Activated CD4-positive, alpha-beta memory T cell treated with anti-CD3 and anti-CD28 coated beads for 36 hours (primary cell): ENCODE measurements at regions of chr15 and their contacts with region 1.

Region 1: DNA sequence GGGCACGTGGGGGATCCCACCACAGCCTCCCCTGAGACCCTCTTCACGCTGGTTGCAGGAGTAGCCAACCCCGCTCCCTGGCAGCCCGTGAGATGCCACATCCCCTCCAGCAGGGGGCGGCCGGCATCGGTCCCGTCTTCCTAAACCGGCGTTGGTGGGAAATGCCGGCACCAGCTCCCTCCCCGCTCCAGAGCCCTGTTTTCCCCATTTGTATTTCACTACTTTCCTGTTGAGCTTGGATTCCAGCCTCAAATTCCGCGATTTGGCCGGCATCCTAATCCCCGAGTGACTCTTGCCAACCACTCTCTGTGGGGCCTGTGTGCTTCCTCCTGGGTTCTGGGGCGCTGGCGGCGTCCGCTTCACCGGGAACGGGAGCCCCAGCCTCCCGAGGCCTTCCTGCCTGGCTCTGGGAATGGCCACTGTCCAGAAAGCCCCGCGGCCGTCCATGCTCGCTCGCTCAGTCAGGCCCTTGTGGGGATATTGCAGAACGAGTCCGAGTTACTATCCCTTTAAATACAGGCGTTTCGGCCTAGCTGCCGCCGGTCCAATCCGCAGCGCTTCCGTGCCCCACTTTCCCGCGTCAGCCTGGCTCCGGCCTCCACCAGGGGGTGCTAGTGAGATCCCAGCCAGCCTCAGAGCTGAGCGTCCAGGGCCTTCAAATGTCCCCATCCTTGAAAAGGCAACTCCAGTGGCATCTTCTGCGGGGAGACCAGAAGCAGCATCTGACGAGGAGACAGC is 8.1 kb upstream of the ADAMTS17 start:
- DNase-seq: peak; percentile 94
- H3K4me3 Mint-ChIP-seq: peak overlapping the region; percentile 80
- H3K27ac Mint-ChIP-seq: peak overlapping the region; percentile 69
- H3K4me1 Mint-ChIP-seq: peaks cover 6% of the 10 kb centered on the region
- H3K27me3 Mint-ChIP-seq: peaks cover 7% of the 10 kb centered on the region

Region 2: DNA sequence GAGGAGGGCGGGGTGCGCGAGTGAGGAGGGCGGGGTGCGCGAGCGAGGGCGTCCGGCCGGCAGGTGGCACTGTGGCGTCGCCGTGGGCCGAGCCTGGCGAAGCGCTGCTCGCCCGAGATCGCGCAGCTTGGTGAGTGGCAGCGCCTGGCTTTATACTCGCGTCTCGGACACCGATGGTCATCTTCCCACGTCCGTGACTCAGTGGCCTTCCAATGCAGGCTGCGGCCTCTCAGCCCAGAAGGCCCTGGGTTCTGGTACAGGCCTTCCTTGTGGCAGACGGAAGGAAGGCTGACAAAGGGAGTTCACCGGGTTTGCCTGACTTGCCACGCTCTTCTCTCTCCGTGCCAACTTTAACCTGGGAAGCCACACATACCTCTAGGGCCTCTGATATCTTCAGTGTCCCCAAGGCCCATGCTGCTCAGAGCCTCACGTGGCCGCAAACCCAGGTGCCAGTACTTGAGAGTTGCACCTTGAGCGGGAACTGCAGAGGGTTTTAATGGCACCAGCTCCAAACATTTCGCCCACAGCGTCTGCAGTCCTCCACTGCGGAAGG is 421.4 kb before region 1 on chr15:
- CTCF ChIA-PET with region 1: interaction called, 14 read pairs
- POLR2A ChIA-PET with region 1: no interaction called
- intact Hi-C with region 1: no loop called
- DNase-seq: peak; percentile 87
- H3K4me3 Mint-ChIP-seq: peak overlapping the region; percentile 77
- H3K27ac Mint-ChIP-seq: peak overlapping the region; percentile 42
- H3K4me1 Mint-ChIP-seq: peaks cover 8% of the 10 kb centered on the region
- H3K27me3 Mint-ChIP-seq: no peaks in the 10 kb centered on the region

Region 3: DNA sequence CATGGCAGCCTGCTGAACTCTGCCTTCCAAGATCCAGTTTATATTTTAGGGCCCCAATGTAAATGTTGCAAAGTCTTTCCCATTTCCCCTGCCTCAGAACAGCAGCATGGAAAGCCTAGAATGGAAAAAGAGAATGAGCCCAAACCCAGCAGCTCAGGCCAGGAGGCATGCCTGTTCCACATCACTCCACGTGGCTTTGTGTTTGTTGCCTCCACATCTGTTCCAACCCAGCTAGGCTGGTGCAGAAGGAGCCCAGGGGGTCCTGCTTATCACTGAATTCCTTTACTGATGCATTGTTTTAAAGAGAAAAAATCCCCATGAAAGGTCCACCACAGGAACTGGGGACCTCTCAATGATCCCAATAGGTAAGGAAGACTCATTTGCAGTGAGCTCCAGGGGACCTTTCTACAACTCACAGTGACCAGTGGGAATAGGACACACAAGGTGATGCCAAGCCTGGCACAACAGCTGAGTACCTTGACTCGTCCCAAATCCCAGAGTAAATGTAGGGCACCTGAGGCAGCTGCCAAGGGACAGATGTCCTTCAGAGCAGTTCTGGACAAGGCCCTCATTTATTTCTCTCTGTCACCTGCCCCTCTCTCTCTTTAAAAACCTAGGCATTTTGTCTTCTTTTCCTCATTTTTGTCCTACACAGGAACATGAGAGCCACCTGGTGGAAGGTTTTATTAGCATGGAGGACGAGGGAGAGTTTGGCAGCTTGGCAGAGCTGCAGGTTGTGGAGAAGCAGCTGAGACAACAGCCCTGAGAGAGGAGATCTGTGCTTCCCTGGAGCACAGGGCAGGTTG is 33.6 kb after region 1 on chr15:
- CTCF ChIA-PET with region 1: interaction called, 72 read pairs
- POLR2A ChIA-PET with region 1: interaction called, 3 read pairs
- intact Hi-C with region 1: loop called (anchors 1 kb)
- DNase-seq: peak; percentile 21
- H3K4me3 Mint-ChIP-seq: no peak overlapping the region
- H3K27ac Mint-ChIP-seq: no peak overlapping the region
- H3K4me1 Mint-ChIP-seq: no peaks in the 10 kb centered on the region
- H3K27me3 Mint-ChIP-seq: peaks cover 6% of the 10 kb centered on the region

Region 4: GRCh38 chr15:100572362-100572983 is 222.6 kb after region 1 on chr15:
- CTCF ChIA-PET with region 1: interaction called, 95 read pairs
- POLR2A ChIA-PET with region 1: interaction called, 4 read pairs
- intact Hi-C with region 1: loop called (anchors 1 kb)
- DNase-seq: no peak
- H3K4me3 Mint-ChIP-seq: no peak overlapping the region
- H3K27ac Mint-ChIP-seq: peak overlapping the region; percentile 82
- H3K4me1 Mint-ChIP-seq: peaks cover 54% of the 10 kb centered on the region
- H3K27me3 Mint-ChIP-seq: no peaks in the 10 kb centered on the region

Region 5: GRCh38 chr15:100596792-100597191 is 246.9 kb after region 1 on chr15:
- CTCF ChIA-PET with region 1: interaction called, 38 read pairs
- POLR2A ChIA-PET with region 1: interaction called, 3 read pairs
- intact Hi-C with region 1: loop called (anchors 1 kb)
- DNase-seq: peak; percentile 98
- H3K4me3 Mint-ChIP-seq: peak overlapping the region; percentile 76
- H3K27ac Mint-ChIP-seq: no peak overlapping the region
- H3K4me1 Mint-ChIP-seq: peaks cover 74% of the 10 kb centered on the region
- H3K27me3 Mint-ChIP-seq: no peaks in the 10 kb centered on the region

Region 6: DNA sequence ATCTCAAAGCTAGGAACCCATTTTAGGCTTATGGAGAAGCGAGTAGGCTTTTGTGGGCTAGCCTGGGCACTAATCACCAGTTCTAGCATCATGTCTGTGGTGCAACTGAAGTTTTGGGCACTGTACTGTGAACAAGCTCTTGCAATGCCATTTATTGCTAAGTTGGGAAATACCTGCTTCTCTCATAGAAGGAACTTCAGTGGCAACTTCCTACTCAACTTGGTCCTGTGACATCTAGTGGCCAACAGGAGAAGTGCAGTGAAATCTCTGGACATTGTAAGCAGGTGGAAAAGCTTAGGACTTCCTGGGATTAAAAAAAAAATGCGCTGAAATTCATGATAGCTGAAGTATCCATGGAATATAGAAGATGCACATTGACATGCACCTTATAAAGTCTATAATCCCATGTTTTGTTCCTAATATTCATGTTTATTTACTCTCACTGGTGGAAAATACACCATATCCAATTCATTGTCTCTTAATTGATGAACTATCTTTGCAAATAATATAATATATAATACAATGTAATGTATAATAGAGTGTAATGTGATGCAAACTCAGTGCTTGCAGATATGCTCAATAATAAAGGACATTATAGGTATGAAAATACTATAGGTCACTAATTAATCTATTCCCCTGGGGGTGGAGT is 523.3 kb after region 1 on chr15:
- CTCF ChIA-PET with region 1: interaction called, 23 read pairs
- POLR2A ChIA-PET with region 1: no interaction called
- intact Hi-C with region 1: loop called (anchors 1 kb)
- DNase-seq: peak; percentile 58
- H3K4me3 Mint-ChIP-seq: no peak overlapping the region
- H3K27ac Mint-ChIP-seq: no peak overlapping the region
- H3K4me1 Mint-ChIP-seq: no peaks in the 10 kb centered on the region
- H3K27me3 Mint-ChIP-seq: peaks cover 23% of the 10 kb centered on the region